ENCODE measurements at regions of chr5 and their contacts with region 1.

Region 1: DNA sequence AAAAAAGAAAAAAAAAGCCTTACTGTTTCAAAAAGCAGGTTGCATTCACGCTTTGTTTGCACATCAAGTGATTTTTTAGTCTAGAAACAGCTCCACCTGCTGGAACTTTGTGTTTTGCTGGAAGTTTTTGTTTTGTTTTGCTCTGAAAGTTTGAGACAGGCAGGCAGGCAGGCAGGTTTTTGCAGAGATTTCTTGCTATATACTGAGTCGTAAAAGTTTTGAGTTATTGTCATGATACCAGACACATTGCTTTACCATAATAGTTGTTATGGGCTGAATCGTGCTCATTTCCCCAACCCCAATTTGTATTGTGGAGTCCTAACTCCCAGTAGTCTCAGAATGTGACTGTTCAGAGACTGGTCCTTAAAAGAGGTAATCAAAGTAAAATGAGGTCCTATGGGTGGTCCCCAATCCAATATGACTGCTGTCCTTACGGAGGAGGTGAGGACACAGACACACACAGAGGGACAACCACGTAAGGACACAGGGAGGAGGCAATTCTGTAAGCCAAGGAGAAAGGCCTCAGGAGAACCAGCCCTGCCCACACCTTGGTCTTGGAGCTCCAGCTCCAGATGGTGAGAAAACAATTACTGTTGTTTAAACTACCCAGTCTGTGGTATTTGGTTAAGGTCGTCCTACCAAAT is 20.9 kb downstream of the OR2Y1 start:
- DNase-seq: peak; percentile 12 to 72 (median 34)
- ATAC-seq: no peak
- H3K4me3 ChIP-seq: no peak overlapping the region
- H3K4me3 Mint-ChIP-seq: no peak overlapping the region
- H3K27ac ChIP-seq: no peak overlapping the region
- H3K27ac Mint-ChIP-seq: peak overlapping the region; percentile 41
- H3K4me1 ChIP-seq: peaks cover 12% of the 10 kb centered on the region
- H3K4me1 Mint-ChIP-seq: peaks cover 23% of the 10 kb centered on the region
- H3K27me3 ChIP-seq: no peaks in the 10 kb centered on the region
- H3K27me3 Mint-ChIP-seq: peaks cover 2% of the 10 kb centered on the region
- CTCF ChIP-seq: peak; percentile 72

Region 2: GRCh38 chr5:180494060-180494509 is 224.8 kb before region 1 on chr5 and contains the start of gene CNOT6:
- CTCF ChIA-PET with region 1: no interaction called
- POLR2A ChIA-PET with region 1: no interaction called
- intact Hi-C with region 1: loop called in 1 of 2 experiments (anchors 10 kb)
- DNase-seq: peak; percentile 90 to 98 (median 95)
- ATAC-seq: peak; percentile 91
- H3K4me3 ChIP-seq: peak within 1 kb of the TSS; percentile 64
- H3K4me3 Mint-ChIP-seq: peak within 1 kb of the TSS; percentile 98
- H3K27ac ChIP-seq: peak within 1 kb of the TSS; percentile 80 to 88
- H3K27ac Mint-ChIP-seq: peak within 1 kb of the TSS; percentile 99
- H3K4me1 ChIP-seq: peaks cover 16% of the 10 kb centered on the region
- H3K4me1 Mint-ChIP-seq: peaks cover 40% of the 10 kb centered on the region
- H3K27me3 ChIP-seq: no peaks in the 10 kb centered on the region
- H3K27me3 Mint-ChIP-seq: no peaks in the 10 kb centered on the region
- CTCF ChIP-seq: no peak
- total RNA-seq, gene CNOT6: 13.1 to 13.9 TPM

Region 3: DNA sequence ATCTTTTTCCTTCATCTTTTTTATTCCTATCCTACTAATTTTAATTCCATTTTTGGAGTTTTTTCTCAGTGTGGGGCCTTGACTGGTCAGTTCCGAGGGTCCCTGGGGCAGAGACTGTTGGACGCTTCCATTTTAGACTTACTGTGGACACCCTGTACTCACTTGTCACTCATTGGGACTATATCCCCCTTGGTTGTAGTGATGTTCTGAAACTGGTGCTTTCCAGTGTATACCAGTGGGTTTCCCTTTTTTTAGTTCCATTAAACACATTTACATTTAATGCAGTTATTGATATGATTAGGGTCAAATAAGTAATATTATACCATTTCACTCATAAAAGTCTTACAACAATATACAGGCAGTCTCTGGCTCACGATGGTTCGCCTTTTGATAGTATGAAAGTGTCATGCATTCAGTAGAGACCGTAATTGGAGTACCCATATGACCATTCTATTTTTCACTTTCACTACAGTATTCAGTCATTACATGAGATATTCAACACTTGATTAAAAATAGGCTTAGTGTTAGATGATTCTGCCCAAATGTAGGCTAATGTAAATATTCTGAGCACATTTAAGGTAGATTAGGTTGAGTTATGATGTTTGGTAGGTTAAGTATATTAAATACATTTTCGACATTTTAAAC is 178.8 kb before region 1 on chr5:
- CTCF ChIA-PET with region 1: no interaction called
- POLR2A ChIA-PET with region 1: no interaction called
- intact Hi-C with region 1: no loop called
- DNase-seq: no peak
- ATAC-seq: no peak
- H3K4me3 ChIP-seq: no peak overlapping the region
- H3K4me3 Mint-ChIP-seq: no peak overlapping the region
- H3K27ac ChIP-seq: no peak overlapping the region
- H3K27ac Mint-ChIP-seq: no peak overlapping the region
- H3K4me1 ChIP-seq: no peaks in the 10 kb centered on the region
- H3K4me1 Mint-ChIP-seq: peaks cover 25% of the 10 kb centered on the region
- H3K27me3 ChIP-seq: no peaks in the 10 kb centered on the region
- H3K27me3 Mint-ChIP-seq: no peaks in the 10 kb centered on the region
- CTCF ChIP-seq: no peak

Region 4: DNA sequence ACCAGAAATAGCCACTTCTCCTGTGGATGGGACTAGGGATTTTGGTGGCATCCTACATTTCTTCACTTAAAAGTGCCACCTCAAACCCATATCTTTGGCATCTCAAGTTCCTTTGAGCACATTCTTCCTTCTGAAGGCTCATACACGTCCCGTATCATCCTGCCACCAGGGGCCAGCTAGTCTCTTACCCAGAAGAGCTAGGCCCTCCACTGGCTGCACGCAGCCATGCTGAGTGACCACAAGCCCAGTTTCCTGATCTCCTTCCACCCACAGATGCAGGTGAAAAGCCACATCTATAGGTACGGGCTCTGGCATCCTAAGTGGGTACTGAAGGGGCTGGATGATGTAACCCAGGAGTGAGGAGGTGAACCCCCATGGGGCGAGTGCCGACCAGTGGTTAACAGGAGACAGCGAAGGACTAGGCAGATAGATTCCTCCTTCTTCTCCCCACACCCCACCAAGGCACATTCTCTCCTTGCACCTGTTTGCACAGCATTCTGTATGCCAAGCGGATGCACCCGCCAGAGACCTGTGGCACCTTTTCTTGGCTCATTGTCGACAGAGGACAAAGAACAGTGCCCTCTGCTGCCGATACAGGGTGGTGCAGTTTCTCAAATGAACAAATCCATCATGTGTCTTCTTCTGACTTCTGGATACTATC is 113.2 kb before region 1 on chr5:
- CTCF ChIA-PET with region 1: interaction called, 23 read pairs
- POLR2A ChIA-PET with region 1: no interaction called
- intact Hi-C with region 1: loop called (anchors 1 to 10 kb)
- DNase-seq: peak; percentile 23 to 76 (median 64)
- ATAC-seq: peak; percentile 80
- H3K4me3 ChIP-seq: no peak overlapping the region
- H3K4me3 Mint-ChIP-seq: no peak overlapping the region
- H3K27ac ChIP-seq: no peak overlapping the region
- H3K27ac Mint-ChIP-seq: no peak overlapping the region
- H3K4me1 ChIP-seq: no peaks in the 10 kb centered on the region
- H3K4me1 Mint-ChIP-seq: peaks cover 3% of the 10 kb centered on the region
- H3K27me3 ChIP-seq: no peaks in the 10 kb centered on the region
- H3K27me3 Mint-ChIP-seq: peaks cover 2% of the 10 kb centered on the region
- CTCF ChIP-seq: peak; percentile 69

Region 5: DNA sequence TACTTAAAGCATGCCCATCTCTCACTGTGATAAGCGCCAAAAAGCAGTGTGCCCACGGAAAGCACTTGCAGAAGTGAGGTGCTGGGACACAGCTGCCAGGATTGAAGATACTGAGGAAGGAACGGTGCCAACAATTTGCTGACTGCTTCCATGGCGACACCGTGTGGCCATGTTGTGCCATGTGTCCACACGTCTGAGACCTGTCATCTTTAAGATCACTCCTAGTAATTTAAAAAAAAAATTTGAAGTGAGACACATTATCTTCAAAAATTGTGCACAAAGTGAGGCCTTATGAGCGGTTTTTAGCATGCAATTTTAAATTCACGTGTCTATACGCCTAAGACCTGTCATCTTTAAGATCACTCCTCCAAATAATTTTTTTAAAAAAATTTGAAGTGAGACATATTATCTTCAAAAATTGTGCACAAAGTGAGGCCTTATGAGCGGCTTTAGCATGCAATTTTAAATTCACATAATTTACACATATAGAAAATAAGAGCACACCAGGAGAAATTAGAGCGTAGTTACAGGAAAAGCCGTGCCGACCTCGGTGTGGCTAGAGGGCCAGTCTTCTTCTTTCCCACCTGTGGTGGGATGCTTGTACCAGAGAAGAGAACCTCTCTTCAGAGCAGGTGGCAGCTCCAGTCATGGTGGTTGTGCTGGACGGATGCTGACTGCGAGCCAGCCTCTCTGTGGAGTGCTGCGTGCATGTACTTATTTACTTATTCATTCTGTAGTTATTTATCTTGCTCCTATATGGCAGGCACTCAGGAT is 48.2 kb before region 1 on chr5:
- CTCF ChIA-PET with region 1: interaction called, 37 read pairs
- POLR2A ChIA-PET with region 1: no interaction called
- intact Hi-C with region 1: loop called (anchors 1 to 5 kb)
- DNase-seq: peak in 8 of 9 experiments; percentile 28 to 76 (median 51)
- ATAC-seq: peak; percentile 70
- H3K4me3 ChIP-seq: no peak overlapping the region
- H3K4me3 Mint-ChIP-seq: peak overlapping the region; percentile 40
- H3K27ac ChIP-seq: no peak overlapping the region
- H3K27ac Mint-ChIP-seq: no peak overlapping the region
- H3K4me1 ChIP-seq: peaks cover 6% of the 10 kb centered on the region
- H3K4me1 Mint-ChIP-seq: peaks cover 18% of the 10 kb centered on the region
- H3K27me3 ChIP-seq: peaks cover 2 to 3% of the 10 kb centered on the region in 2 experiments
- H3K27me3 Mint-ChIP-seq: peaks cover 7% of the 10 kb centered on the region
- CTCF ChIP-seq: peak; percentile 55

Region 6: GRCh38 chr5:180689071-180689694 is 29.7 kb before region 1 on chr5:
- CTCF ChIA-PET with region 1: interaction called, 54 read pairs
- POLR2A ChIA-PET with region 1: interaction called, 4 read pairs
- intact Hi-C with region 1: loop called in 1 of 2 experiments (anchors 1 kb)
- DNase-seq: peak in 8 of 9 experiments; percentile 32 to 84 (median 64)
- ATAC-seq: peak; percentile 70
- H3K4me3 ChIP-seq: peak overlapping the region; percentile 24 to 39
- H3K4me3 Mint-ChIP-seq: peak overlapping the region; percentile 78
- H3K27ac ChIP-seq: peak overlapping the region; percentile 36 to 68
- H3K27ac Mint-ChIP-seq: peak overlapping the region; percentile 95
- H3K4me1 ChIP-seq: peaks cover 85% of the 10 kb centered on the region
- H3K4me1 Mint-ChIP-seq: peaks cover 85% of the 10 kb centered on the region
- H3K27me3 ChIP-seq: no peaks in the 10 kb centered on the region
- H3K27me3 Mint-ChIP-seq: no peaks in the 10 kb centered on the region
- CTCF ChIP-seq: no peak

Measured in CD8-positive, alpha-beta T cell (primary cell).